ENCODE measurements at regions of chr12 and their contacts with region 1.

Region 1: DNA sequence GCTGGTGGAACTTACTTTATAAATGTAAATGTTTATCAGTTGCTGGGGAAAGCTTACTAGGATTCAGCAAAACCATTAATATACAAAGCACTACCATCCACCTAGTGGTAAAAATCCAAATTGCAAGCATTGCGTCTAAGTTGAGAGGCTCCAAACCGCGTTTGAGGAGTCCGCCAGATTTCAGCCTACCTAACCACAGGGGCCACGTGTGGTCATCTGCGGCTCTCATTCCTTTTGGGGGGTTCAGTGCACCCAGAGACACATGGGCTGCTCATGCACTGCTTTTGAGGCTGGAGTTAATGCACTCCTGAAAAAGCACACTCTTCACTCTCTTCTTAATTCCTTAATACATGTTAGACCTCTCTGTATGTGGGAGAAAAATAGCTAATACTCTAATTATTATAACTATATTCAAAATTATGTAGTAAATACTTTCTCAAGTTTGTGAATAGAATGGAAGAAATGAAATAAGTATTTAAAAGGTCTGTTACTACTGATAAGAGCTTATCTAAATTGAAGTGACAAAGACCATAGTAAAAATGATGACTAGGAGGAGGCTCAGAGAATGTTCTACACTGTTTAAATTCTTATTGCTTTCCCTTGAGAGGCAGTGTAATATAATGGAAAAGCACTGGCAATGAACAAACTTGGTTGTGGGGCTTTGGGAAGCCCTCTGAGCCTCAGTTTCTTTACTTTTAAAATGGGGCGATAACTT is 41.4 kb upstream of the MANSC4 start:
- DNase-seq: peak in 7 of 9 donors; percentile 21 to 52 (median 42)
- ATAC-seq: peak; percentile 56
- H3K4me3 ChIP-seq: no peak overlapping the region
- H3K4me3 Mint-ChIP-seq: peak overlapping the region in 7 of 10 donors; percentile 31 to 70 (median 54)
- H3K27ac ChIP-seq: no peak overlapping the region
- H3K27ac Mint-ChIP-seq: peak overlapping the region in 5 of 9 donors; percentile 8 to 88 (median 57)
- H3K4me1 ChIP-seq: peaks cover 0 to 8% of the 10 kb centered on the region in 2 donors
- H3K4me1 Mint-ChIP-seq: peaks cover 0 to 34% (median 13%) of the 10 kb centered on the region in 7 donors
- H3K27me3 ChIP-seq: no peaks in the 10 kb centered on the region
- H3K27me3 Mint-ChIP-seq: peaks cover 0 to 52% (median 4%) of the 10 kb centered on the region in 5 donors

Region 2: DNA sequence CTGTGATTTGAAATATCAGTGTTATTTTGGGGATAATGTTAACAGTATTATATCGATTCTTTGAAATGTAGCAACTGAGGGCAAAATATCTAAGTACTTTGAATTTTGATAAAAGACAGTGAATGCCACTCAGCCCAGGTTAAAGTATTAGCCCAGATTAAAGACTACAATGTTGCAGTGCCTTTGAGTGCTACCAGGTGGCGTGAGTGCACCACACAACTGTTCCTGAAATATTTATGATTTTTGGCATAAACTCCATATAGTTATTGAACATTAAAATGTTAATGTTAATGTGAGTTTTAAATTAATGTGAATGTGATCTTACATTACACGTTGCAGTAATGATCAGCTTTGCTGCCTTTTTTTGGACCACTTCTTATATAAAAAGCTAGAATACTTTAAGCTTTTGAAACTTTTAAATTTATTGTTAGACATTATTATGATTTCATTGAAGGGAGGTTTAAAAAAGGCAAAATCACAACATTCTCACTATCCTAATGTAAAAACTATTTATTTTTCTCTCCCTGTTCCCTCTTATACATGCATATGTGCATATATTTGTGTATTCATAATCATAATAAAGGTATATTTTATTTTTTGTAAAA is 88.3 kb before region 1 on chr12:
- CTCF ChIA-PET with region 1: interaction called, 53 read pairs
- POLR2A ChIA-PET with region 1: interaction called, 4 read pairs
- intact Hi-C with region 1: loop called (anchors 1 kb)
- DNase-seq: peak in 6 of 9 donors; percentile 12 to 42 (median 28)
- ATAC-seq: peak; percentile 73
- H3K4me3 ChIP-seq: no peak overlapping the region
- H3K4me3 Mint-ChIP-seq: no peak overlapping the region
- H3K27ac ChIP-seq: no peak overlapping the region
- H3K27ac Mint-ChIP-seq: no peak overlapping the region
- H3K4me1 ChIP-seq: no peaks in the 10 kb centered on the region
- H3K4me1 Mint-ChIP-seq: peaks cover 0 to 3% (median 0%) of the 10 kb centered on the region in 7 donors
- H3K27me3 ChIP-seq: no peaks in the 10 kb centered on the region
- H3K27me3 Mint-ChIP-seq: no peaks in the 10 kb centered on the region

Region 3: DNA sequence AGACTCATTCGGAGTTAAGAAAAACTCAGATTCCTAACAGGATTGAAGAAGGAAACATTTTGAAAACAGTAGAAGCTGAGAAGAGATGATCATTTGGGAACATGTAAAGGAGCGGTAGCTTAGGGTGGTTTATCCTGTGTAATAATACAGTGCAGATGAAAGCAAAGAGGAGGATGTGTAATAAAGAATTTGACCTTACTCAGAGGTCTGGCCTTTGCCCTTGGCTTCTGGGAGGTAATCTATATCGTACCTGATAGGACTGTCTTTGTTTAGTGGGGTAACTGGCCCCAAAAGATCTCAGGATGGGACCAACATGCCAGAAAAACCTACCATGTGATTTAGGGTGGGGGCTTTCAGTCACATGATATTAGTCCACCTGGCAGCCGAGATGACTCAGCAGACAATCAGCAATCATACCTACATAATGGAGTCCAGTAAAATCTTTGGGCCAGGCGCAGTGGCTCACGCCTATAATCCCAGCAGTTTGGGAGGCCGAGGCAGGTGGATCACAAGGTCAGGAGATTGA is 64.7 kb before region 1 on chr12:
- CTCF ChIA-PET with region 1: interaction called, 3 read pairs
- POLR2A ChIA-PET with region 1: no interaction called
- intact Hi-C with region 1: loop called in 1 of 2 experiments (anchors 1 kb)
- DNase-seq: no peak
- ATAC-seq: no peak
- H3K4me3 ChIP-seq: no peak overlapping the region
- H3K4me3 Mint-ChIP-seq: no peak overlapping the region
- H3K27ac ChIP-seq: no peak overlapping the region
- H3K27ac Mint-ChIP-seq: no peak overlapping the region
- H3K4me1 ChIP-seq: no peaks in the 10 kb centered on the region
- H3K4me1 Mint-ChIP-seq: peaks cover 0 to 4% (median 0%) of the 10 kb centered on the region in 7 donors
- H3K27me3 ChIP-seq: no peaks in the 10 kb centered on the region
- H3K27me3 Mint-ChIP-seq: no peaks in the 10 kb centered on the region

Region 4: DNA sequence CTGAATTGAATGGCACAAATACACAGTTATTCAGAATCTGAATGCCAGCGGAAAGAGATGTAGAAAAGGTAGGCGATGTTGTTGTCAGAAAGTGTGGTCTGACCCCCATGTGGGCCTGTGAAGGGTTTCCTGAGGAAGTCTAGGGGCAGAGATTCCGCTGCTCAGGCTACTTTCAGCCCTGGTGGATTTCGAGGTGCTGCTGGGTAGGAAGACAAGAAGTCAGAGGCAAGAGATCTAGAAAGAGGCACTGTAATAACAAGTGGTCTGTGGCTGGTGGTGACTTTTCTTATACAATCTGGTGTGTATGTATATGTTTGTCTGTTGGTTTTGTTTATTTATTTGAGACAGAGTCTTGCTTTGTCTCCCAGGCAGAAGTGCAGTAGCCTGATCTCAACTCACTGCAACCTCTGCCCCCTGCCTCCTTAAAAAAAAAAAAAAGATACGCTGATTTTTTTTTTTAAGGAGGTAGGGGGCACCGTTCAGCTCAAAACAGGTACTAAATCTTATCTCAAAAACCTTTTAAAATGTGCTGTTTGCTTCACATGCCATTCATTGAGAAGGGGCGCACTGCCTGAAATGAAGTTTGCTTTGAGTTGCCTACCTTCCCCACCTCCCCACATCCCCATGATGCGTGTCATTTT is 14.2 kb before region 1 on chr12:
- CTCF ChIA-PET with region 1: interaction called, 9 read pairs
- POLR2A ChIA-PET with region 1: interaction called, 4 read pairs
- intact Hi-C with region 1: loop called in 1 of 2 experiments (anchors 1 kb)
- DNase-seq: peak in 3 of 9 donors; percentile 10 to 14 (median 13)
- ATAC-seq: peak; percentile 36
- H3K4me3 ChIP-seq: no peak overlapping the region
- H3K4me3 Mint-ChIP-seq: peak overlapping the region; percentile 1 to 87 (median 74)
- H3K27ac ChIP-seq: peak overlapping the region; percentile 46
- H3K27ac Mint-ChIP-seq: peak overlapping the region; percentile 20 to 95 (median 86)
- H3K4me1 ChIP-seq: no peaks in the 10 kb centered on the region
- H3K4me1 Mint-ChIP-seq: peaks cover 7 to 47% (median 24%) of the 10 kb centered on the region in 7 donors
- H3K27me3 ChIP-seq: no peaks in the 10 kb centered on the region
- H3K27me3 Mint-ChIP-seq: peaks cover 0 to 18% (median 0%) of the 10 kb centered on the region in 5 donors

Region 5: DNA sequence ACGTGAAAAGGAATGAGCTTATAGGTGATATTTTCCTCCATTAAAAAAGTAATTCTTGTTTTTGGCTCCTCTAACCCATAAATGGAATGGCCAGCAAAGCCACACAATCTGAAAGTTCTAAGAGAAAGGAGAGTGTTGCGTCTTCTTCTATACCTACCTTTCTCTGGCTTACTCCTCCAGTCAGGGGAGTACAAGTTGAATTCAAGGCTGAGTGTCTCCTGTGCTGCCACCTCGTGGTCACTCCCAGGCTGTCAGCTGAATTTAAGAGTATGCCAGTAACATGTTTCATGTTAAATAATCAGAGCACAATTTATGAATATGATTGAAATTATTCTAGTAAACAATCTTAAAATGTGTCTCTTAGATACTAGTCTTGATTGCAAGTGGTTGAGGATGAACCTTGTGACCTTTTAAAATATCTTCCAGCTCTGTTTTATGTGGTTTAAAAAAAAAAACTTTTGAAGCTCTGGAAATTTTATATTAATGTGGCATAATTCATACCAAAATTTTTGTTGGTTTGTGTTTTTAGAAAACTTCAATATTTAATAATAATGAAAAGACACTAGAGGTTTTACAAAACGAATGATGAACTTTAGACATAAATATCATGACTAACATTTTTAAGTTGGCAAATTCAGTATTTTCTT is 119.5 kb after region 1 on chr12:
- CTCF ChIA-PET with region 1: interaction called, 14 read pairs
- POLR2A ChIA-PET with region 1: no interaction called
- intact Hi-C with region 1: loop called (anchors 1 to 5 kb)
- DNase-seq: peak; percentile 19 to 59 (median 48)
- ATAC-seq: peak; percentile 84
- H3K4me3 ChIP-seq: no peak overlapping the region
- H3K4me3 Mint-ChIP-seq: no peak overlapping the region
- H3K27ac ChIP-seq: no peak overlapping the region
- H3K27ac Mint-ChIP-seq: no peak overlapping the region
- H3K4me1 ChIP-seq: no peaks in the 10 kb centered on the region
- H3K4me1 Mint-ChIP-seq: no peaks in the 10 kb centered on the region
- H3K27me3 ChIP-seq: no peaks in the 10 kb centered on the region
- H3K27me3 Mint-ChIP-seq: peaks cover 4 to 20% (median 8%) of the 10 kb centered on the region in 5 donors

Region 6: GRCh38 chr12:28242496-28243309 is 421.3 kb after region 1 on chr12:
- CTCF ChIA-PET with region 1: no interaction called
- POLR2A ChIA-PET with region 1: no interaction called
- intact Hi-C with region 1: no loop called
- DNase-seq: no peak
- ATAC-seq: no peak
- H3K4me3 ChIP-seq: no peak overlapping the region
- H3K4me3 Mint-ChIP-seq: no peak overlapping the region
- H3K27ac ChIP-seq: no peak overlapping the region
- H3K27ac Mint-ChIP-seq: peak overlapping the region in 1 of 9 donors; percentile 53
- H3K4me1 ChIP-seq: peaks cover 0 to under 1% of the 10 kb centered on the region in 2 donors
- H3K4me1 Mint-ChIP-seq: peaks cover 3 to 42% (median 27%) of the 10 kb centered on the region in 7 donors
- H3K27me3 ChIP-seq: no peaks in the 10 kb centered on the region
- H3K27me3 Mint-ChIP-seq: no peaks in the 10 kb centered on the region

Measured in naive thymus-derived CD4-positive, alpha-beta T cell (primary cell).